ENCODE measurements at regions of chr13 and their contacts with region 1.

Region 1: DNA sequence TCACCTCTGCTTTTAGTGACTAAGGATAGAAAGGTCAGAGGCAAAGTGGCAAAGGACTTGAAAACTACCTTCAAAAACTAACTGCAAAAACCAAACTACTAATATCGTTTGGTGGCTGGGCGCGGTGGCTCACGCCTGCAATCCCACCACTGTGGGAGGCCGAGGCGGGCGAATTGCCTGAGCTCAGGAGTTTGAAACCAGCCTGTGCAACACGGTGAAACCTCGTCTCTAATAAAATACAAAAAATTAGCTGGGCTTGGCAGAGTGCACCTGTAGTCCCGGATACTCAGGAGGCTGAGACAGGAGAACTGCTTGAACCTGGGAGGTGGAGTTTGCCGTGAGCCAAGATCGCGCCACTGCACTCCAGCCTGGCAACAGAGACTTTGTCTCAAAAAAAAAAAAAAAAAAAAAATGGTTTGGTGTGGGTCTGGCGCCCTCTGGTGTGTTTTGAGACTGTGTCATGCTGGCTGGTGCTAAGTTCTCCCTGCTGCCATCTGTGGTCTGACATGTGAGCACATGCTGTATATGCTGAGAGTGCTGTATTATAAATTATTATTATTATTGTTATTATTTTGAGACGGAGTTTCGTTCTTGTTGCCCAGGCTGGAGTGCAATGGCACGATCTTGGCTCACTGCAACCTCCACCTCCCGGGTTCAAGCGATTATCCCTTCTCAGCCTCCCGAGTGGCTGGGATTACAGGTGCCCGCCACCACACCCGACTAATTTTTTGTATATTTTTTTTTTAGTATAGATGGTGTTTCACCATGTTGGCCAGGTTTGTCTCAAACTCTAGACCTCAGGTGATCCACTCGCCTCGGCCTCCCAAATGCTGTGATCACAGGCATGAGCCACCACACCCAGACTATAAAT is 36.0 kb upstream of the RNF17 start:
- DNase-seq: peak; percentile 90
- H3K4me3 ChIP-seq: no peak overlapping the region
- H3K27ac ChIP-seq: no peak overlapping the region
- H3K4me1 ChIP-seq: no peaks in the 10 kb centered on the region
- H3K27me3 ChIP-seq: no peaks in the 10 kb centered on the region
- CTCF ChIP-seq: peak; percentile 83

Region 2: DNA sequence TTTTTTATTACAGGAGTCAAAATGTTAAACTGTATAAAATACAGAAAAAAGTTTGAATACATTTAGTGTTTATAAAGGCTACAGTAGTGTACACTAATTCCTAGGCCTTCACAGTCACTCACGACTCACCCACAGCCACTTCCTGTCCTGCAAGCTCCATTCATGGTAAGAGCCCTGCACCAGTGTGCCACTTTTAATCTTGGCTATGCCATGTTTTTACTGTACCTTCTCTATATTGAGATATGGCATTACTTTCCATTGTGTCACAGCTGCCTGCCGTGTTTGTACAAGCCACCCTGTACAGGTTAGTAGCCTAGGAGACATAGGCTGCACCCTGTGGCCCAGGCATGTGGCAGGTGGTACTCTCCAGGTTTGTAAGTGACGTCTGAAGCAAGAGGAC is 386.5 kb before region 1 on chr13:
- CTCF ChIA-PET with region 1: no interaction called
- POLR2A ChIA-PET with region 1: no interaction called
- intact Hi-C with region 1: no loop called
- DNase-seq: no peak
- H3K4me3 ChIP-seq: no peak overlapping the region
- H3K27ac ChIP-seq: no peak overlapping the region
- H3K4me1 ChIP-seq: no peaks in the 10 kb centered on the region
- H3K27me3 ChIP-seq: no peaks in the 10 kb centered on the region
- CTCF ChIP-seq: no peak

Region 3: DNA sequence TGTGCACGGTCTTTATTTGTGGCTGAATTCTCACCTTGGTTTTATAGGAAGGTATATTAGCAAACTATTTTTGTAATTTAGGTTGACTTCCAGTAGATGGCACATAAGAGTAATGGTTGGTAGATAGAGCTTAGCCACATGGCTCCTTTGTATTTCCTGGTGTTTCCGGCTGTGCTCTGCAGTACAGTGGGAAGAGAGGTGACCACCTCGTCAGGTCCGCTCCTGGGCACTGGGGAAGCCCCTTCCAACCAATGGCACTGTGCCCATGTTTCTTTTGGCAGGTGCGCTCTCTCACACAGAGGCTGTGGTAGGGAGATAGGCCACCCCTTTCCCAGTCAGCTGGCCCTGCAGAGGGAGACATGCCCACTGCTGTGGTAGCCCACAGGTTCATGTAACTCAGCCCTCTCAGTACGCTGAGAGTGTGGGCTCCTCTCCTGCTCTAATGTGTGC is 122.0 kb before region 1 on chr13:
- CTCF ChIA-PET with region 1: interaction called, 8 read pairs
- POLR2A ChIA-PET with region 1: no interaction called
- intact Hi-C with region 1: loop called (anchors 5 kb)
- DNase-seq: peak; percentile 45
- H3K4me3 ChIP-seq: no peak overlapping the region
- H3K27ac ChIP-seq: no peak overlapping the region
- H3K4me1 ChIP-seq: no peaks in the 10 kb centered on the region
- H3K27me3 ChIP-seq: no peaks in the 10 kb centered on the region
- CTCF ChIP-seq: peak; percentile 40

Region 4: GRCh38 chr13:24683838-24684599 is 43.9 kb before region 1 on chr13:
- CTCF ChIA-PET with region 1: interaction called, 12 read pairs
- POLR2A ChIA-PET with region 1: no interaction called
- intact Hi-C with region 1: no loop called
- DNase-seq: peak; percentile 79
- H3K4me3 ChIP-seq: no peak overlapping the region
- H3K27ac ChIP-seq: peak overlapping the region; percentile 23
- H3K4me1 ChIP-seq: peaks cover 17% of the 10 kb centered on the region
- H3K27me3 ChIP-seq: peaks cover 17% of the 10 kb centered on the region
- CTCF ChIP-seq: peak; percentile 89

Region 5: GRCh38 chr13:24693862-24694471 is 34.0 kb before region 1 on chr13:
- CTCF ChIA-PET with region 1: interaction called, 9 read pairs
- POLR2A ChIA-PET with region 1: interaction called, 3 read pairs
- intact Hi-C with region 1: loop called (anchors 5 kb)
- DNase-seq: peak; percentile 85
- H3K4me3 ChIP-seq: no peak overlapping the region
- H3K27ac ChIP-seq: no peak overlapping the region
- H3K4me1 ChIP-seq: no peaks in the 10 kb centered on the region
- H3K27me3 ChIP-seq: no peaks in the 10 kb centered on the region
- CTCF ChIP-seq: peak; percentile 86

Region 6: GRCh38 chr13:26062844-26063444 is 1335.0 kb after region 1 on chr13:
- CTCF ChIA-PET with region 1: no interaction called
- POLR2A ChIA-PET with region 1: no interaction called
- intact Hi-C with region 1: no loop called
- DNase-seq: peak; percentile 71
- H3K4me3 ChIP-seq: no peak overlapping the region
- H3K27ac ChIP-seq: no peak overlapping the region
- H3K4me1 ChIP-seq: no peaks in the 10 kb centered on the region
- H3K27me3 ChIP-seq: no peaks in the 10 kb centered on the region
- CTCF ChIP-seq: peak; percentile 77